Right cardiac atrium (tissue), 5 donors: ENCODE measurements at regions of chr6 and their contacts with region 1.

Region 1: GRCh38 chr6:39309942-39310531 is 4.2 kb downstream of the KCNK17 start:
- DNase-seq: peak; percentile 74 to 90 (median 87)
- ATAC-seq: peak; percentile 50 to 68
- H3K4me3 ChIP-seq: no peak overlapping the region
- H3K27ac ChIP-seq: no peak overlapping the region
- H3K4me1 ChIP-seq: no peaks in the 10 kb centered on the region
- H3K27me3 ChIP-seq: no peaks in the 10 kb centered on the region

Region 2: GRCh38 chr6:38871741-38872568 is 438.1 kb before region 1 on chr6:
- intact Hi-C with region 1: loop called in 2 of 4 experiments (anchors 5 to 10 kb)
- DNase-seq: peak in 2 of 3 donors; percentile 20 to 61
- ATAC-seq: peak; percentile 49 to 60
- H3K4me3 ChIP-seq: no peak overlapping the region
- H3K27ac ChIP-seq: no peak overlapping the region
- H3K4me1 ChIP-seq: no peaks in the 10 kb centered on the region
- H3K27me3 ChIP-seq: peaks cover 2% of the 10 kb centered on the region

Region 3: DNA sequence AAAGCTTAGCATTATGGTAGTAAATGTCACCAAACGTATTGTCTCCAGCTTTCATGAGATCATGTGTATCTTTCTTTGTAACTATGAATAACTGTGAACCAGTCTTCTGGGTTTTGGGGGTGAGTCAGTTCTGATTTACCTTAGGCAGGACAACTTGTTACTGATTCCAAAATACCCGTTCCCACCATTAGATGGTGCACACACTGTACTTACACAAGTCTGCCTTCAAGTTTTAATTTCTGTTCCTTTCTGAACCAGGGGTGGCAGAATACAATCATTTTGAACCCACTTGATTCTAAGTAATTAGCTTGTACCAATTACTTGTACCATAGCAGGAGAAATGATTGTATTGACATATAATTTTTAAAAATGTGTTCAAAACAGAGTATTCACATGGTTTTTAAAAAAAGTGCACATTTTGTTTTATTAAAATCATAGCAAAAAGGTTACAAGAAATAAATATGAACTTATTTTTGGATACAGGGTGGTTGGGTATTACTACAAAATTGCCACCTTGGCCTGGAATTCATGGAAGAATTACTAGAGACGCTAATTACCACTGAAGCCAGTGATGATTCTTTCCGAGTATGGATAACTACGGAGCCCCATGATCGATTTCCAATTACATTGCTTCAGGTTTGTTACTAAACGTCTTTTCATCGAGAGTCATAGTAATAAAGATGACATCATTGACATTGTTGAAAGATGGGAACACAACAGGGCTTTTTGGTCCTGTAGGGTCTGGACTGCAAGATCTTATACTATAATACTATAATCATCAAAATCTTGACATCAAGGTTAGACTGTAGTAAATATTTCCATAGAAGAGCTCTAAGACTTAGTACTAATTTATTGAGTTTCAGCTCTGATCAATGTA is 336.6 kb before region 1 on chr6:
- intact Hi-C with region 1: loop called in 2 of 4 experiments (anchors 5 kb)
- DNase-seq: no peak
- ATAC-seq: peak; percentile 62 to 71
- H3K4me3 ChIP-seq: no peak overlapping the region
- H3K27ac ChIP-seq: no peak overlapping the region
- H3K4me1 ChIP-seq: no peaks in the 10 kb centered on the region
- H3K27me3 ChIP-seq: no peaks in the 10 kb centered on the region

Region 4: GRCh38 chr6:39143233-39143930 is 166.7 kb before region 1 on chr6:
- intact Hi-C with region 1: no loop called
- DNase-seq: peak in 1 of 3 donors; percentile 50
- ATAC-seq: no peak
- H3K4me3 ChIP-seq: no peak overlapping the region
- H3K27ac ChIP-seq: no peak overlapping the region
- H3K4me1 ChIP-seq: peaks cover 3% of the 10 kb centered on the region
- H3K27me3 ChIP-seq: no peaks in the 10 kb centered on the region

Region 5: DNA sequence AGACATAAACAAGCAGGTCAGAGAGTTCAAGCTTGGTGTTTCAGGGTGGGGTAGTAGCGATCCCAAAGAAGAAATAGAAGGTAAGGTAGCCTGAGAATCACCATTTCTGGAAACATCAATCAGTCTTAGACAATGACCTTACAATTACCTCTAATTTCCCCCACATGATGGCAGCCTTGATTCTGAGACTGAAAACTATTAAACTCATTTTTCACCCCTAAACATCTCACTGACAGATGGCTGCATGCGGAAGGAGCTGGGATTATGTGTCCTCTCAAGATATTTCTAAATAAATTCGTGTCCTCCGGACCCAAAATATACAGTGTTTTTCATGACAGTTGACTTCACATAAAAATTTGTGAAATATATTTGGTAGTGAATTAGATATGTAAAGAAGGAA is 354.1 kb after region 1 on chr6:
- intact Hi-C with region 1: no loop called
- DNase-seq: no peak
- ATAC-seq: no peak
- H3K4me3 ChIP-seq: no peak overlapping the region
- H3K27ac ChIP-seq: no peak overlapping the region
- H3K4me1 ChIP-seq: no peaks in the 10 kb centered on the region
- H3K27me3 ChIP-seq: no peaks in the 10 kb centered on the region